ENCODE measurements at regions of chr4 and their contacts with region 1.

Region 1: GRCh38 chr4:110049951-110050925 is 137.6 kb downstream of the EGF start:
- DNase-seq: peak in 1 of 5 donors; percentile 24
- ATAC-seq: peak in 1 of 4 donors; percentile 30
- H3K4me3 ChIP-seq: no peak overlapping the region
- H3K27ac ChIP-seq: no peak overlapping the region
- H3K4me1 ChIP-seq: no peaks in the 10 kb centered on the region
- H3K27me3 ChIP-seq: no peaks in the 10 kb centered on the region
- CTCF ChIP-seq: peak; percentile 55 to 84 (median 76)
- POLR2A ChIP-seq: no peak

Region 2: GRCh38 chr4:110193822-110194761 is 143.9 kb after region 1 on chr4:
- intact Hi-C with region 1: loop called in 2 of 10 experiments (anchors 5 kb)
- DNase-seq: peak in 4 of 5 donors; percentile 44 to 61 (median 50)
- ATAC-seq: peak in 3 of 4 donors; percentile 14 to 42 (median 29)
- H3K4me3 ChIP-seq: no peak overlapping the region
- H3K27ac ChIP-seq: no peak overlapping the region
- H3K4me1 ChIP-seq: peaks cover 0 to 26% (median 4%) of the 10 kb centered on the region in 12 donors
- H3K27me3 ChIP-seq: no peaks in the 10 kb centered on the region
- CTCF ChIP-seq: no peak
- POLR2A ChIP-seq: no peak

Region 3: GRCh38 chr4:110211007-110211769 is 160.9 kb after region 1 on chr4:
- intact Hi-C with region 1: loop called (anchors 1 to 5 kb)
- DNase-seq: no peak
- ATAC-seq: peak in 1 of 4 donors; percentile 53
- H3K4me3 ChIP-seq: peak overlapping the region in 2 of 12 donors; percentile 34 to 37
- H3K27ac ChIP-seq: no peak overlapping the region
- H3K4me1 ChIP-seq: no peaks in the 10 kb centered on the region
- H3K27me3 ChIP-seq: no peaks in the 10 kb centered on the region
- CTCF ChIP-seq: peak; percentile 51 to 92 (median 72)
- POLR2A ChIP-seq: no peak